ENCODE measurements at regions of chr5 and their contacts with region 1.

Region 1: DNA sequence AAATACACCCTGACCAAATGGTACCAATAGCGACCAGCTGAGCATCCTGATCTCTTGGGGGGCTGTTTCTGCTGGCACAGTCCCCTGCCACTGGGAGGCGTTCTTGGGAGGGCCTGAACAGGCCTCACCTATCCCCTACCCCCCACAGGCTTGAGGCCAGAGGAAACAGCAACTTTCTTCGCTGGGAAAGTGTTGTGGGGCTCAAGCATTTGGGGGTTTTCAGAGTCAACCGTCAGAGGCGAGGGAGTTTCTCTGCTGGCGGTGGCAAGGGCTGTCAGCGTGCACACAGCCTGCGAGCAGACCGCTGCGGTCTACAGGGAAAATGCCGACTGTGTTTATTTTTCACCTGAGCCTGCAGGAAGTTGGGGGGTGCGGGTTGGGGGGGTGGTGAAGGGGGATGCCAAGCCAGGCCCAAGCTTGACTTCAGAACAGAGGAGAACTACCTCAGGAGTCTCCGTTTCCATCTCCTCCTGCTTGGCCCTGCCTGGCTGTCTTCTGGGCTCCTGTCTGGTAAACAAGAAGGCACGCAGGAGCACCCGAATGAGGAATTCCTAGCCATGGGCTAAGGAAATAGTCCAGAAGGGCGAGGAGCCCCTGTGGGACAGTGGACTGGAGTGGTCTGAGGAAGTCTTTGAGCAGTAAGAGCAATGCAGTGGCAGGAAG is 18.0 kb downstream of the TCF7 start:
- DNase-seq: peak; percentile 89
- H3K4me3 Mint-ChIP-seq: peak overlapping the region; percentile 51
- H3K27ac Mint-ChIP-seq: peak overlapping the region; percentile 90
- H3K4me1 Mint-ChIP-seq: peaks cover 97% of the 10 kb centered on the region
- H3K27me3 Mint-ChIP-seq: no peaks in the 10 kb centered on the region

Region 2: DNA sequence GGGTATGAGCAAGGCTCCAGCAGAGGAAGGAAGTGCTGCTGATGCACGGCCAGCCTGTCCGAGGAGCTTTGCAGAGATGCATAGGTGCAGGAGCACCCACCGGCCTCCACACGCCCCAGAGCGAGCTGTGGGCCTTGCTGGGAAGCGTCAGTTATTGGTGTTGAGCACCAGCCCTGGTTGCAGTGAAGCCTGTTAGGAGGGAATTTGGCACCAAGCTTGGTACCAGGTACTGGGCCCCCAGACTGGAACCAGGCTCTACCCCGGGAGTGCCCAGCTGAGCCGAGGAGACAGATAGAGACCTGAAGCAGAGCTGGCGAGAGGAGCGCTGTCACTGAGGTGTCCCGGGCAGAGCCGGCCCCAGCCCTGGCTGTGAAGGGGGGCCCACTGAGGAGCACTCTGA is 12.8 kb before region 1 on chr5:
- CTCF ChIA-PET with region 1: interaction called, 253 read pairs
- POLR2A ChIA-PET with region 1: interaction called, 43 read pairs
- intact Hi-C with region 1: loop called (anchors 1 kb)
- DNase-seq: peak; percentile 54
- H3K4me3 Mint-ChIP-seq: peak overlapping the region; percentile 70
- H3K27ac Mint-ChIP-seq: peak overlapping the region; percentile 84
- H3K4me1 Mint-ChIP-seq: peaks cover 84% of the 10 kb centered on the region
- H3K27me3 Mint-ChIP-seq: no peaks in the 10 kb centered on the region

Measured in activated CD4-positive, alpha-beta memory T cell treated with anti-CD3 and anti-CD28 coated beads for 36 hours (primary cell).